Activated naive CD4-positive, alpha-beta T cell treated with anti-CD3 and anti-CD28 coated beads for 36 hours (primary cell): ENCODE measurements at regions of chrX and their contacts with region 1.

Region 1: DNA sequence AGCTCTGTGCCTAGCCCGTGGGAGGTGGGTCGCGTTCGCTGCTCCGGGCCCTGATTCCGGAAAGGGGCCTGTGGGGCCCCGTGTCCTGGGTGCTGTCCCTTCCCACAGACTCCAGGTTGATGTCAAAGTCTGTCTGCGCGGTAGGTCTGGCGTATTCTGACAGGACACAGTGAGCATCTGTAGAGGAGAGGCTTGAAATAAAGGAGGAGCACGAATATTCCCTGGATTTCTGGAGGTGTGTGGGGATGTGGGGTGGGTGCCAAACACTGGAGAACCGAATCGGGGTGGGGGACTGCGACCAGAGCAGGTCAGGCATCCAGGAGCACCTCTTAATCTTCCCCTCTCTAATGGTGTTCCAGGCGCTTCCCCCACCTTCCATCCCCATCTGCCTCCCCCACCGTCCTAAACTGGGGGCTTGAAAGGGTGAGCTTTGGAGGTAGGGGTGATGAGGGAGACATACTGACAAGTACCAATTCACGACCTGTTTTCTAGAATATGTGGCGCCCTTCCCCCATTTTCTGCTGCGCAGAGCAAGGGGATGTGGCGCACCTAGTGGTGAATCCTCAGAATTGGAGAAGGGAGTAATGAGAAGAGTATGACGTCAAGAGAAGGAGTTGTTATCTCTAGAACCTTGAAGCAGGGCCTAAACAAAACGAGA is 877 bp downstream of the GPRASP1 start:
- DNase-seq: peak; percentile 70
- H3K4me3 Mint-ChIP-seq: peak overlapping the region; percentile 86
- H3K27ac Mint-ChIP-seq: peak overlapping the region; percentile 81
- H3K4me1 Mint-ChIP-seq: peaks cover 21% of the 10 kb centered on the region
- H3K27me3 Mint-ChIP-seq: no peaks in the 10 kb centered on the region

Region 2: DNA sequence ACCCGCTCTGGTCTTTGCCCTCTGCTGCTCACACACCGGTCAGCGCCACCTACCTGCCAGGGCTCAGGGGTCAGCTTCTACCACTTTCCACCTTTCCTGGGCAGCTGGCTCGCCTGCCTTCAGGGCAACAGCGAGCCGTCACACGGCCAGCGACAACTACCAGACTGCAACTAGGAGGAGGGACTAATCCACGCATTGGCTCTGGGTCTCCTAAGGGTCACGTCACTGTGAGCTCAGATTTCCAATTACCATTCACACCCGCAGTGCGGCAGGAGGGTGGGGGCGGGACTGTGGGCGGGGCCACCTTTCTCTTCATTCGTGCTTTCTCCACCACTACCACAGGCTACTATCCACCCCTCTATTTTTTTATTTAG is 496.4 kb before region 1 on chrX and contains the start of gene BEX5:
- CTCF ChIA-PET with region 1: no interaction called
- intact Hi-C with region 1: loop called (anchors 2 kb)
- DNase-seq: peak; percentile 73
- H3K4me3 Mint-ChIP-seq: peak within 1 kb of the TSS; percentile 98
- H3K27ac Mint-ChIP-seq: peak within 1 kb of the TSS; percentile 84
- H3K4me1 Mint-ChIP-seq: peaks cover 11% of the 10 kb centered on the region
- H3K27me3 Mint-ChIP-seq: peaks cover 3% of the 10 kb centered on the region
- total RNA-seq, gene BEX5: 6.6 to 7.2 TPM

Region 3: DNA sequence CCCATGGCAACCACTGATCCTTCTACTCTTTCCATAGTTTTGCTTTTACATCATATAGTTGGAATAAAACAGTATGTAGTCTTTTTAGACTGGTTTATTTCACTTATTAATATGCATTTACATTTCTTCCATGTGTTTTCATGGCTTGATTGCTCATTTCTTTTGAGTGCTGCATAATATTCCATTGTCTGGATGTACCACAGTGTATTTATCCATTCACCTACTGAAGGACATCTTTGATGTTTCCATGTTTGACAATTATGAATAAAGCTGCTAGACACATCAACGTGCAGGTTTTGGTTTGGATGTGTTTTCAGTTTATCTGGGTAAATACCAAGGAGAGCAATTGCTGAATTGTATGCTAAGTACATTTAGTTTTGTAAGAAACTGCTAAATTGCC is 14.6 kb before region 1 on chrX:
- CTCF ChIA-PET with region 1: no interaction called
- intact Hi-C with region 1: no loop called
- DNase-seq: no peak
- H3K4me3 Mint-ChIP-seq: no peak overlapping the region
- H3K27ac Mint-ChIP-seq: no peak overlapping the region
- H3K4me1 Mint-ChIP-seq: no peaks in the 10 kb centered on the region
- H3K27me3 Mint-ChIP-seq: no peaks in the 10 kb centered on the region

Region 4: GRCh38 chrX:102672856-102673255 is 20.7 kb after region 1 on chrX:
- CTCF ChIA-PET with region 1: no interaction called
- intact Hi-C with region 1: no loop called
- DNase-seq: no peak
- H3K4me3 Mint-ChIP-seq: no peak overlapping the region
- H3K27ac Mint-ChIP-seq: no peak overlapping the region
- H3K4me1 Mint-ChIP-seq: peaks cover 6% of the 10 kb centered on the region
- H3K27me3 Mint-ChIP-seq: no peaks in the 10 kb centered on the region

Region 5: GRCh38 chrX:102712952-102713625 is 60.9 kb after region 1 on chrX:
- CTCF ChIA-PET with region 1: no interaction called
- intact Hi-C with region 1: loop called (anchors 2 kb)
- DNase-seq: peak; percentile 38
- H3K4me3 Mint-ChIP-seq: peak overlapping the region; percentile 79
- H3K27ac Mint-ChIP-seq: no peak overlapping the region
- H3K4me1 Mint-ChIP-seq: peaks cover 11% of the 10 kb centered on the region
- H3K27me3 Mint-ChIP-seq: peaks cover 7% of the 10 kb centered on the region